Naive thymus-derived CD4-positive, alpha-beta T cell (primary cell): ENCODE measurements at regions of chr3 and their contacts with region 1.

Region 1: GRCh38 chr3:67384760-67385397 is 269.5 kb downstream of the SUCLG2 start:
- DNase-seq: peak in 6 of 9 donors; percentile 16 to 47 (median 42)
- ATAC-seq: peak; percentile 55
- H3K4me3 ChIP-seq: no peak overlapping the region
- H3K4me3 Mint-ChIP-seq: no peak overlapping the region
- H3K27ac ChIP-seq: no peak overlapping the region
- H3K27ac Mint-ChIP-seq: peak overlapping the region in 4 of 9 donors; percentile 0 to 19 (median 14)
- H3K4me1 ChIP-seq: no peaks in the 10 kb centered on the region
- H3K4me1 Mint-ChIP-seq: peaks cover 7 to 34% (median 18%) of the 10 kb centered on the region in 7 donors
- H3K27me3 ChIP-seq: no peaks in the 10 kb centered on the region
- H3K27me3 Mint-ChIP-seq: no peaks in the 10 kb centered on the region

Region 2: DNA sequence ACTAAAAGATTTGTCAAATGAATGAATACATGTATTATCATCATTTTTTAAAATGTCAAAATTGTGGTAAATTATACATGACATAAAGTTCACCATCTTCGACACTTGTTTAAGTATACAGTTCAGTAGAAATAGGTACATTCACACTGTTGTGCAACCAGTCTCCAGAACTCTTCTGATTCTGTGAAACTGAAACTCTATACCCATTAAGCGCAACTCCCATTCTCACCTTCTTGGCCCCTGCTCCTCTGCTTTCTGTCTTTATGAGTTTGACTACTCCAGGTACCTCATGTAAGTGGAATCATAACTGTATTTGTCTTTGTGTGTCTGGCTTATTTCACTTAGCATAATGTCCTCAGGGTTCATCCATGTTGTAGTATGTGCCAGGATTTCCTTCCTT is 436.8 kb before region 1 on chr3:
- CTCF ChIA-PET with region 1: no interaction called
- POLR2A ChIA-PET with region 1: no interaction called
- intact Hi-C with region 1: no loop called
- DNase-seq: no peak
- ATAC-seq: no peak
- H3K4me3 ChIP-seq: no peak overlapping the region
- H3K4me3 Mint-ChIP-seq: no peak overlapping the region
- H3K27ac ChIP-seq: no peak overlapping the region
- H3K27ac Mint-ChIP-seq: no peak overlapping the region
- H3K4me1 ChIP-seq: no peaks in the 10 kb centered on the region
- H3K4me1 Mint-ChIP-seq: no peaks in the 10 kb centered on the region
- H3K27me3 ChIP-seq: no peaks in the 10 kb centered on the region
- H3K27me3 Mint-ChIP-seq: peaks cover 0 to 11% (median 5%) of the 10 kb centered on the region in 5 donors

Region 3: DNA sequence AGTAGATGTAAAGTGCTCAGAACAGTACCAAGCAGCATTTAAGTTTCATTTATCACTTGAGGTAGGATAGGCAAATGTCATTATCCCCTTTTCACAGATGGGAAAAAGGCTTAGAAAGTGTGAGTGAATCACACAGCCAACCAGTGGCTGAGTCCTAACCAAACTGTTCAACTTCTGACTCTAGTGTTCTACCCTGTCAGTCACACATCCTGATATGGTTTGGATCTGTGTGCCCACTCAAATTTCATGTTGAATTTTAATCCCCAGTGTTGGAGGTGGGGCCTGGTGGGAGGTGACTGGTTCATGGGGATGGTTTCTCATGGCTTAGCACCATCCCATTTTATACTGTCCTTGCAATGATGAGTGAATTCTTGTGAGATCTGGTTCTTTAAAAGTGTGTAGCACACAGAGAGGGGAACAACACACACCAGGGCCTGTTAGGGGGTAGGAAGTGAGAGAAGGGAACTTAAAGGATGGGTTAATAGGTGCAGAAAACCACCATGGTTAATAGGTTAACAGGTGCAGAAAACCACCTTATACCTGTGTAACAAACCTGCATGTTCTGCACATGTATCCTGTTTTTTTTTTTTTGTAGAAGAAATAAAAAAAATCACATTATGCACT is 35.2 kb before region 1 on chr3:
- CTCF ChIA-PET with region 1: no interaction called
- POLR2A ChIA-PET with region 1: no interaction called
- intact Hi-C with region 1: no loop called
- DNase-seq: peak in 1 of 9 donors; percentile 55
- ATAC-seq: no peak
- H3K4me3 ChIP-seq: no peak overlapping the region
- H3K4me3 Mint-ChIP-seq: no peak overlapping the region
- H3K27ac ChIP-seq: no peak overlapping the region
- H3K27ac Mint-ChIP-seq: no peak overlapping the region
- H3K4me1 ChIP-seq: no peaks in the 10 kb centered on the region
- H3K4me1 Mint-ChIP-seq: peaks cover 0 to 10% (median 0%) of the 10 kb centered on the region in 7 donors
- H3K27me3 ChIP-seq: no peaks in the 10 kb centered on the region
- H3K27me3 Mint-ChIP-seq: no peaks in the 10 kb centered on the region

Region 4: GRCh38 chr3:67790043-67790442 is 405.2 kb after region 1 on chr3:
- CTCF ChIA-PET with region 1: interaction called, 29 read pairs
- POLR2A ChIA-PET with region 1: no interaction called
- intact Hi-C with region 1: loop called (anchors 1 kb)
- DNase-seq: peak; percentile 17 to 75 (median 61)
- ATAC-seq: peak; percentile 78
- H3K4me3 ChIP-seq: no peak overlapping the region
- H3K4me3 Mint-ChIP-seq: peak overlapping the region in 3 of 10 donors; percentile 3 to 19 (median 19)
- H3K27ac ChIP-seq: no peak overlapping the region
- H3K27ac Mint-ChIP-seq: peak overlapping the region in 1 of 9 donors; percentile 3
- H3K4me1 ChIP-seq: peaks cover 0 to 9% of the 10 kb centered on the region in 2 donors
- H3K4me1 Mint-ChIP-seq: peaks cover 6 to 23% (median 15%) of the 10 kb centered on the region in 7 donors
- H3K27me3 ChIP-seq: no peaks in the 10 kb centered on the region
- H3K27me3 Mint-ChIP-seq: peaks cover 0 to 7% (median 0%) of the 10 kb centered on the region in 5 donors

Region 5: GRCh38 chr3:68007621-68008226 is 622.8 kb after region 1 on chr3:
- CTCF ChIA-PET with region 1: no interaction called
- POLR2A ChIA-PET with region 1: no interaction called
- intact Hi-C with region 1: loop called in 1 of 2 experiments (anchors 5 kb)
- DNase-seq: peak; percentile 21 to 59 (median 45)
- ATAC-seq: peak; percentile 81
- H3K4me3 ChIP-seq: peak overlapping the region; percentile 62
- H3K4me3 Mint-ChIP-seq: peak overlapping the region; percentile 70 to 98 (median 88)
- H3K27ac ChIP-seq: no peak overlapping the region
- H3K27ac Mint-ChIP-seq: peak overlapping the region in 7 of 9 donors; percentile 45 to 87 (median 73)
- H3K4me1 ChIP-seq: peaks cover 0 to 10% of the 10 kb centered on the region in 2 donors
- H3K4me1 Mint-ChIP-seq: peaks cover 5 to 37% (median 27%) of the 10 kb centered on the region in 7 donors
- H3K27me3 ChIP-seq: no peaks in the 10 kb centered on the region
- H3K27me3 Mint-ChIP-seq: peaks cover 0 to 55% (median 17%) of the 10 kb centered on the region in 5 donors

Region 6: DNA sequence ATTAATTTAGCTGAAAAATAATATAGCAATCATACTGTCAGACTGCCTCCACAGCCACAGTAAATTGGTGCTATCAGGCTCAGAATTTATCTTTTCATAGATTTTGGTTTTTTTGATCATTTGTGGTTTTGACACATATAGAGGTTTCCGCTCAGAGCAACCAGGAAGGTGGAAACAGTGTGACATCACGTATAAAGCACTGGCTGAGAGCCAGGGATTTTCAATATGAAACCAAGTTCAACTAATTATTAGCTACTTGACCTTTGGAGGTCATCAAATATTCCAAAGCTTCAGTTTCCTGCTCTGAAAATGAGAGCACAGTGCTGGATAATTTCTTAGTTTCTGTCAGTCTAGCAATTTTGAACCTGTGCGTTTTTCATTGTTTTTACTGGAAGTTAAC is 703.3 kb after region 1 on chr3:
- CTCF ChIA-PET with region 1: no interaction called
- POLR2A ChIA-PET with region 1: no interaction called
- intact Hi-C with region 1: no loop called
- DNase-seq: peak in 7 of 9 donors; percentile 61 to 81 (median 74)
- ATAC-seq: peak; percentile 86
- H3K4me3 ChIP-seq: peak overlapping the region; percentile 23
- H3K4me3 Mint-ChIP-seq: peak overlapping the region; percentile 8 to 75 (median 39)
- H3K27ac ChIP-seq: no peak overlapping the region
- H3K27ac Mint-ChIP-seq: peak overlapping the region in 8 of 9 donors; percentile 1 to 85 (median 48)
- H3K4me1 ChIP-seq: peaks cover 27 to 37% of the 10 kb centered on the region in 2 donors
- H3K4me1 Mint-ChIP-seq: peaks cover 25 to 85% (median 71%) of the 10 kb centered on the region in 7 donors
- H3K27me3 ChIP-seq: no peaks in the 10 kb centered on the region
- H3K27me3 Mint-ChIP-seq: peaks cover 0 to 4% (median 0%) of the 10 kb centered on the region in 5 donors

Region 7: GRCh38 chr3:68876112-68876713 is 1491.3 kb after region 1 on chr3:
- CTCF ChIA-PET with region 1: no interaction called
- POLR2A ChIA-PET with region 1: no interaction called
- intact Hi-C with region 1: loop called (anchors 1 to 2 kb)
- DNase-seq: peak in 7 of 9 donors; percentile 30 to 63 (median 51)
- ATAC-seq: peak; percentile 69
- H3K4me3 ChIP-seq: no peak overlapping the region
- H3K4me3 Mint-ChIP-seq: no peak overlapping the region
- H3K27ac ChIP-seq: no peak overlapping the region
- H3K27ac Mint-ChIP-seq: no peak overlapping the region
- H3K4me1 ChIP-seq: no peaks in the 10 kb centered on the region
- H3K4me1 Mint-ChIP-seq: no peaks in the 10 kb centered on the region
- H3K27me3 ChIP-seq: no peaks in the 10 kb centered on the region
- H3K27me3 Mint-ChIP-seq: peaks cover 5 to 28% (median 25%) of the 10 kb centered on the region in 5 donors